ENCODE measurements at regions of chr13 and their contacts with region 1.

Region 1: DNA sequence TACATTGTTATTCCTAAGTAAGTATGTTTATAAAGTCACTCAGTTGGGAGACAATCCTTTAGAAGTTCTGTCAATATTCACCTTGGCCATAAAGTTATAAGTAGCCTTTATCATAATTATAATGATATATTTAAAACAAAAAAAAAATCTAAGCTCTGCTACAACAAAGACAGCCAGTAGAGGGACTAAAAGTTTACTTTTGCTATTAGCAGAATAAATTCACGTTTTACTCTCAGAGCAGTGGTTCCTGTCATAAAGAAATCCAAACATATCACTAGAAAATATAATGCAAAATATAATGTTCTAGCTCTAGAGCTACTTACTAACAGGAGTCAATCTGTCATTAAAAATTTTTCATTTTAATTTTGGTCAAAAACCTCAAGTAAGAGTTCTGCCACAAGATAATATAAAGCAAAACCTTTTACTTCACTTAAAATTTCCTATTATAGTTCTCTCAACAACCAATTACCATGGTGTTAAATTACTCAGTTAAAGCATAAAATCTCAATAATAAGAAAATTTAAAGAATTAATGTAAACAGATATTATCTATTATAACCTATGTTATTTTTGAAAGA is 17.7 kb downstream of the INTS6 start:
- DNase-seq: no peak
- H3K4me3 Mint-ChIP-seq: no peak overlapping the region
- H3K27ac Mint-ChIP-seq: no peak overlapping the region
- H3K4me1 Mint-ChIP-seq: peaks cover 9% of the 10 kb centered on the region
- H3K27me3 Mint-ChIP-seq: no peaks in the 10 kb centered on the region

Region 2: DNA sequence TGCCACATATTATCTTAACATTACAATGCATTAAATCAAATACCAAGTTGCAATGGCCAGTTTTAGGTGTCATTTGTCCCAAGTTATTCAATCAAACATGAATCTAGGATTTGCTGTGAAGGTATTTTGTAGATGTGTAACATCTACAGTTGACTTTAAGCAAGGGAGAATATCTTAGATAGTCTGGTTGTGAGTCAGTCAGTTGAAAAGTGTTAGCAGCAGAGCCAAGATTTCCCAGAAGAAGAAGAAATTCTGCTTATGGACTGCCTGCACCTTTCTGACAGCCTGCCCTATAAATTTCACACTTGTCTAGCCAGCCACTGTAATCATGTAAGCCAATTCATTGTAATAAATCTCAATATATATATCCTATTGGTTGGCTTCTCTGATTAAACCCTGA is 59.1 kb after region 1 on chr13:
- intact Hi-C with region 1: no loop called
- DNase-seq: no peak
- H3K4me3 Mint-ChIP-seq: no peak overlapping the region
- H3K27ac Mint-ChIP-seq: no peak overlapping the region
- H3K4me1 Mint-ChIP-seq: no peaks in the 10 kb centered on the region
- H3K27me3 Mint-ChIP-seq: peaks cover 21% of the 10 kb centered on the region

Region 3: GRCh38 chr13:51797664-51798488 is 362.8 kb after region 1 on chr13:
- intact Hi-C with region 1: loop called (anchors 2 kb)
- DNase-seq: peak; percentile 47
- H3K4me3 Mint-ChIP-seq: no peak overlapping the region
- H3K27ac Mint-ChIP-seq: no peak overlapping the region
- H3K4me1 Mint-ChIP-seq: peaks cover 26% of the 10 kb centered on the region
- H3K27me3 Mint-ChIP-seq: peaks cover 4% of the 10 kb centered on the region

Region 4: DNA sequence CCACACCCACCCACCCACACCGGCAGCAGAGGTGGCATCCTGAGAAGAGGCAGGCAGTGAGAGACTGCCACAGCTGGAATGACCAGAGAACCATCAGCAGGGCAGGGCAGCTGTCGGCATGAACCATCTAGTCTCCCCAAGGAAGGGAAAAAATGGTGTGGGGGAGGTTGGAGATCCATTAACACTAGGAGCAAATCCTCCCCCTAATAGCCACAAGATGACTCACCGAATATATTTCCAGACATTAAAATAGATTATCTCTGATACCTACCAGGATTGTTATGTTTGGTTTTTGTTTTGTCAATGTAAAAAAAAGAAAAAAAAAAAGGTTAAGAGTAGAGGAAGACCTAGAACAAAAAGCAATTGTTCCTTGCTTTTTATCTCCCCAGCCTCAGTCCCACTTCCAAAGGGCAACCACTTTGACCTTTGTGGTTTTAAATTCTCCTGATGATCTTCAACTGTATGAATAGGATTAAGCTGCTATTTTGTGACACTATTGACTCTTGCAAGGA is 936.7 kb after region 1 on chr13:
- intact Hi-C with region 1: no loop called
- DNase-seq: no peak
- H3K4me3 Mint-ChIP-seq: no peak overlapping the region
- H3K27ac Mint-ChIP-seq: no peak overlapping the region
- H3K4me1 Mint-ChIP-seq: no peaks in the 10 kb centered on the region
- H3K27me3 Mint-ChIP-seq: peaks cover 3% of the 10 kb centered on the region